Ascending aorta (tissue), 2 donors: ENCODE measurements at regions of chr4 and their contacts with region 1.

Region 1: DNA sequence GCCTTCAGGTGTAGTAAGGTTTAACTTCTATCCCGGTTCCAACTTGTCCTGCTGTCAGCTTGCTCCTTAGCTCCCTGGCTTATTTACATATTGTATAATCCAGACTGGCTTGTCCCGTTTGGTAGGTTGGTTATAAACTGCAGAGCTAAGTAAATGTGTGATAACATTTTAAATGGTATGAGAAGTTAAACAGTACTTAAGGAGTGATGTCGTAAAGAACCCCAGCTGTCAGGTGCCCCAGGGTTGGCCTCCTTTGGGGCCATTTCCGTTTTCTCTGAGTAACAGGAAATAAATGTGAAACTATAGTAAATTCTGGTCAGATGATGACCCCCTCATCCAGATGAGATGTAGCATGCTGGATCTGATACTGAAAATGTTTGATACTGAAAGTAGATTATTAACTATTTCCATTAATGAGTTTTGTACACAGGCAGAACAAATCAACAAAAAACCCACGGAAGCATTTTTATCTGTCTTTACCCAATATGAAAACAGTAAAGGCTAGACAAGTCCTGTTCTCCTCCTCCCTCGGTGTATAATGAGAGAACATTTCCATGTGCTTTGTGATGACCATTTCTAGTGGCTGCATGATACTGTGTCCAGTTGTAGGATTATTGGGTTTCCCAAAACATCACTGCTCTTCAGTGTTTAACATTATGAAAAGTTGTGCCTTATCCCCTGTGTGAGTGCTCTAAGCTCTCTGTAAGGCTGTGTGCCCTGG is 22.4 kb downstream of the GAB1 start:
- DNase-seq: no peak
- H3K4me3 ChIP-seq: peak overlapping the region; percentile 14 to 27
- H3K27ac ChIP-seq: peak overlapping the region; percentile 79 to 83
- H3K4me1 ChIP-seq: peaks cover 13 to 65% of the 10 kb centered on the region in 2 donors
- H3K27me3 ChIP-seq: no peaks in the 10 kb centered on the region
- CTCF ChIP-seq: no peak

Region 2: GRCh38 chr4:143346206-143346605 is 12.9 kb before region 1 on chr4:
- intact Hi-C with region 1: loop called (anchors 2 kb)
- DNase-seq: no peak
- H3K4me3 ChIP-seq: peak overlapping the region in 1 of 2 donors; percentile 28
- H3K27ac ChIP-seq: no peak overlapping the region
- H3K4me1 ChIP-seq: peaks cover 14 to 34% of the 10 kb centered on the region in 2 donors
- H3K27me3 ChIP-seq: no peaks in the 10 kb centered on the region
- CTCF ChIP-seq: no peak

Region 3: GRCh38 chr4:144181391-144181790 is 822.3 kb after region 1 on chr4:
- intact Hi-C with region 1: no loop called
- DNase-seq: no peak
- H3K4me3 ChIP-seq: no peak overlapping the region
- H3K27ac ChIP-seq: no peak overlapping the region
- H3K4me1 ChIP-seq: no peaks in the 10 kb centered on the region
- H3K27me3 ChIP-seq: no peaks in the 10 kb centered on the region
- CTCF ChIP-seq: no peak